Activated CD8-positive, alpha-beta T cell treated with anti-CD3 and anti-CD28 coated beads for 36 hours (primary cell): ENCODE measurements at regions of chr3 and their contacts with region 1.

Region 1: DNA sequence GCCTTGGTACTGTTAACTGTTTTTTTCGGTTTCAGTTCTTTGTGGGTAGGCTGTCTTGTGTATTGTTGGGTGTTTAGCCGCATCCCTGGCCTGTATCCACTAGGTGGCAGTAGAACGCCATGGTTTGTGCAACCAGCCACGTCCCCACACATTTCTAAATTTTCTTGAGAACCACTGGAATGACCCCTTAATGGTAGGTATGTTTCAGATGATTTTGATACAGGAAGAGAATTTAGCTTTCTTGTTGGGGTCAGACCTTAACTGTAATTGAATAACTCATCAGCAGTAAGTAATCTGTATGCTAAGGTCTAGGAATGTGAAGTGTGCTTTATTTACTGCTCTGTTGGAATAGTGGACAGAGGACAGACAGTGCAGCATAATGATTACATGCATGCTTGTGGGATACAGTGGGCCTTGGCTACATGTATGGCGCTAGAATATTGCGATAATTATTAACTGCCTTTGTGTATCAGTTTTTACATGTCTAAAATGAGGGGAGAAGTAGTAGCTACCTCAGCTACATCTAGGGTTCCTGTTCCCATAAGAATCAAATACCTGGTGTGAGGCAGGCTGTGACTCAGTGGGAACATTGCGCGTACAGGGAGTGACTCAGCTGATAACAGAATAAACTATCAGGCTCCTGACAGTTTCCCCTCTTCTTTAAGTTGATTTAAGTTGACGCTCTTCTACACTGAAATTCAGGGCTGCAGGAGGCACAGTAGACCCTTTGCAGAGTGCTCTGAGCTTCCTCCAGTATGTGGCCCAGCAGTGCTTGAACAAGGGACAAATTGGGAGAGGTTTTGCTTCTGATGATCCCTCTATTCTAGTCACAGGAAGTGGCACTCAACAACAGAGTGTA is 25.0 kb upstream of the GPR171 start:
- DNase-seq: peak; percentile 89
- ATAC-seq: peak; percentile 64
- H3K4me3 Mint-ChIP-seq: peak overlapping the region; percentile 28
- H3K27ac Mint-ChIP-seq: peak overlapping the region; percentile 92
- H3K4me1 Mint-ChIP-seq: peaks cover 64% of the 10 kb centered on the region
- H3K27me3 Mint-ChIP-seq: no peaks in the 10 kb centered on the region
- CTCF ChIP-seq: peak; percentile 92

Region 2: DNA sequence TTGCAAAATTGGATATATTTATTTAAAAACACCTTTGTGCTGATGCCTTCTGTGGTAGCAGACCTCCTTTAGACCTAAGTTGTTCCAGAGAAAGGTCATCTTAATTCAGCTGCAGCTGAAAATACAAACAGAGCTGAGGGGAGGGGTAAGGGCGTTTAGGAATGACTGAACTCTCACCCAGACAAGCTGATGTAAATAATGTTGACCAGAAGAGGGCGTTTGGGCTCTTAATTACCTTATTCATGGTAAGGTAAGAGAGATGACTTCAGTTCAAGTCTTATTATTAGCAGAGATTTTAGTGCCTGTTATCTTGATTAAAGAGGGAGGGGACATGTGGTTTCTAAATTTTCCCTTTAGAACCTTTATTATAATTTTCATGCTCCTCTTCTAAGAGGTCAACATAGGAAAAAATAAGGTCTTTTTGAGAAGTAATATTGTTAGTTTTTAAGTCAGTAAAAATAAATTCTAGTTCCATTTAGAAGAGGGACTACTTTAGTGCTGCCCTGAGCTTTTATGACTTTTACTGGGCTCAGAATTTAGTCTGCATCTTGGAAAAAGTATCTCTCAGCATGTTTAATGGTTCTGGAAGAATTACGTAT is 71.3 kb before region 1 on chr3:
- CTCF ChIA-PET with region 1: interaction called, 25 read pairs
- POLR2A ChIA-PET with region 1: no interaction called
- intact Hi-C with region 1: no loop called
- DNase-seq: peak; percentile 49
- ATAC-seq: peak; percentile 77
- H3K4me3 Mint-ChIP-seq: no peak overlapping the region
- H3K27ac Mint-ChIP-seq: no peak overlapping the region
- H3K4me1 Mint-ChIP-seq: no peaks in the 10 kb centered on the region
- H3K27me3 Mint-ChIP-seq: peaks cover 5% of the 10 kb centered on the region
- CTCF ChIP-seq: peak; percentile 52

Region 3: DNA sequence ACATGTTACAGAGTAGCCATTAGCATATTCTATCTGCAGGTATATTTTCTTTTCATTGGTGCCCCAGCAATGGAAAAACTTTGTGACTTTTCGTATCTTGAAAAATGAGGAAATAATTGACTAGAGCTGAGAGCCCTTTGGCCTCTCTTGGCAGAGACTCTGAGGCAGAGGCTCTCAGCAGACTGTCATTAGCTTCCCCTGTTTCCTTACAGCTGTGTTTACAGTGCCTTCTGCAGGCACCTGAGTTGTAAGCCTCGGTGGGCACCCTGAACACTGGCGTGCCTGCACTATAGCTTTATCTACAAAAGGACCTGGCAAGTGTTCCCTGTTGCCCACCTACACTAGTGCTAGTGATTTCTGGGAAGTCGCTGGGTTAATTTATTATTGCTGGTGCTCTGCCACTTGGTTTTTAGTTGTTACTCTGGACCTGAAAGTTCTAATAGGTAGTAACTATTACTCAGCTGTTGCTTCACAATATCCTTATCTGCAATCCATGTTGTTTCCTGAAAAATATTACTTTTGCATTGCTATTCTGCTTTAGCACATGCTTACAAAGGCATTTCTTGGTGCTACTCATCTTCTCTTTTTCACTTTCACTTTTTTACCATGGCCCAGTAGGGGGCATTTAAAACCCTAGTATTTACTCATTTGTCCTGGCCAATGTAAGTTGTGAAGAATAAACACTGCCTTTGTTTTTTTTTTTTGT is 17.2 kb before region 1 on chr3:
- CTCF ChIA-PET with region 1: interaction called, 82 read pairs
- POLR2A ChIA-PET with region 1: interaction called, 17 read pairs
- intact Hi-C with region 1: no loop called
- DNase-seq: no peak
- ATAC-seq: peak; percentile 50
- H3K4me3 Mint-ChIP-seq: peak overlapping the region; percentile 63
- H3K27ac Mint-ChIP-seq: peak overlapping the region; percentile 85
- H3K4me1 Mint-ChIP-seq: peaks cover 51% of the 10 kb centered on the region
- H3K27me3 Mint-ChIP-seq: no peaks in the 10 kb centered on the region
- CTCF ChIP-seq: peak; percentile 39

Region 4: GRCh38 chr3:151282921-151283320 is 54.9 kb after region 1 on chr3:
- CTCF ChIA-PET with region 1: interaction called, 254 read pairs
- POLR2A ChIA-PET with region 1: interaction called, 8 read pairs
- intact Hi-C with region 1: loop called (anchors 1 kb)
- DNase-seq: no peak
- ATAC-seq: peak; percentile 57
- H3K4me3 Mint-ChIP-seq: no peak overlapping the region
- H3K27ac Mint-ChIP-seq: no peak overlapping the region
- H3K4me1 Mint-ChIP-seq: peaks cover 39% of the 10 kb centered on the region
- H3K27me3 Mint-ChIP-seq: no peaks in the 10 kb centered on the region
- CTCF ChIP-seq: peak; percentile 82

Region 5: GRCh38 chr3:151327571-151328198 is 99.6 kb after region 1 on chr3:
- CTCF ChIA-PET with region 1: interaction called, 30 read pairs
- POLR2A ChIA-PET with region 1: no interaction called
- intact Hi-C with region 1: no loop called
- DNase-seq: no peak
- ATAC-seq: no peak
- H3K4me3 Mint-ChIP-seq: no peak overlapping the region
- H3K27ac Mint-ChIP-seq: no peak overlapping the region
- H3K4me1 Mint-ChIP-seq: peaks cover 6% of the 10 kb centered on the region
- H3K27me3 Mint-ChIP-seq: peaks cover 6% of the 10 kb centered on the region
- CTCF ChIP-seq: peak; percentile 49